Panc1 (cell line): ENCODE measurements at regions of chr12 and their contacts with region 1.

Region 1: GRCh38 chr12:20950248-20950647 is 139.7 kb downstream of the SLCO1B3 start:
- DNase-seq: peak; percentile 7
- ATAC-seq: no peak
- H3K4me3 ChIP-seq: no peak overlapping the region
- H3K27ac ChIP-seq: no peak overlapping the region
- H3K4me1 ChIP-seq: no peaks in the 10 kb centered on the region
- H3K27me3 ChIP-seq: no peaks in the 10 kb centered on the region
- CTCF ChIP-seq: peak; percentile 33

Region 2: DNA sequence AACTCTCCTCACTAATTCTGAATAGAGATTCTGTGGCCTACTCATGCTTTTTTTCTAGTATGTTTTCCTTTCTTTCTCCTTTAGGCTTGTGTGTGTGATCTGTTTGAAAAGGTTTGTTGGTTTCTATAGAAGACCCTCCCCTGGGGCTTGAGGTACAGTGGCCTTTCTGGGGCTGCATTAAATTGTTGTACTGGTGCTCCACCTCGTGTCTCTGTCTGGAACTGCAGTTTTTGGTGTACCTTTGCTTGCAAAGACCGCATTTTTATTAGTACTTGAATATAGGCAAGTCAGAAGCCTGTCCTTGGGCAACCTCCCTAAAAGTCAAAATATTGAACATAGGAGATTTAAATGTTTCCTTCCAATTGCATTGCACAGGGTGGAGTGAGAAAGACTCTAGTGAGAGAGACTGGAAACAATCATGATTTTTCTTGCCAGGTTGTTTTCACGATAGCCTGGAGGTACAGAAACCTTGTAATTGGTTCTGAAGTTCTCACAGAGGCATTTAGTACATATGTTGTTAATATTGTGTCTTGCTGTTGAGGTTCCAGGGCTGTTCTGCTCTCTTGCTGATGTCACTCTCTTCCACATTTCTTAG is 219.7 kb after region 1 on chr12:
- CTCF ChIA-PET with region 1: no interaction called
- POLR2A ChIA-PET with region 1: no interaction called
- in situ Hi-C with region 1: no loop called
- intact Hi-C with region 1: loop called (anchors 5 kb)
- DNase-seq: peak; percentile 15
- ATAC-seq: no peak
- H3K4me3 ChIP-seq: no peak overlapping the region
- H3K27ac ChIP-seq: no peak overlapping the region
- H3K4me1 ChIP-seq: no peaks in the 10 kb centered on the region
- H3K27me3 ChIP-seq: no peaks in the 10 kb centered on the region
- CTCF ChIP-seq: peak; percentile 68